ENCODE measurements at regions of chr17 and their contacts with region 1.

Region 1: GRCh38 chr17:27236717-27237315 is 57.1 kb upstream of the WSB1 start:
- DNase-seq: no peak
- H3K4me3 ChIP-seq: no peak overlapping the region
- H3K27me3 ChIP-seq: no peaks in the 10 kb centered on the region
- CTCF ChIP-seq: peak; percentile 84

Region 2: GRCh38 chr17:27106347-27106981 is 130.4 kb before region 1 on chr17:
- CTCF ChIA-PET with region 1: no interaction called
- POLR2A ChIA-PET with region 1: no interaction called
- DNase-seq: no peak
- H3K4me3 ChIP-seq: no peak overlapping the region
- H3K27me3 ChIP-seq: no peaks in the 10 kb centered on the region
- CTCF ChIP-seq: no peak

Region 3: DNA sequence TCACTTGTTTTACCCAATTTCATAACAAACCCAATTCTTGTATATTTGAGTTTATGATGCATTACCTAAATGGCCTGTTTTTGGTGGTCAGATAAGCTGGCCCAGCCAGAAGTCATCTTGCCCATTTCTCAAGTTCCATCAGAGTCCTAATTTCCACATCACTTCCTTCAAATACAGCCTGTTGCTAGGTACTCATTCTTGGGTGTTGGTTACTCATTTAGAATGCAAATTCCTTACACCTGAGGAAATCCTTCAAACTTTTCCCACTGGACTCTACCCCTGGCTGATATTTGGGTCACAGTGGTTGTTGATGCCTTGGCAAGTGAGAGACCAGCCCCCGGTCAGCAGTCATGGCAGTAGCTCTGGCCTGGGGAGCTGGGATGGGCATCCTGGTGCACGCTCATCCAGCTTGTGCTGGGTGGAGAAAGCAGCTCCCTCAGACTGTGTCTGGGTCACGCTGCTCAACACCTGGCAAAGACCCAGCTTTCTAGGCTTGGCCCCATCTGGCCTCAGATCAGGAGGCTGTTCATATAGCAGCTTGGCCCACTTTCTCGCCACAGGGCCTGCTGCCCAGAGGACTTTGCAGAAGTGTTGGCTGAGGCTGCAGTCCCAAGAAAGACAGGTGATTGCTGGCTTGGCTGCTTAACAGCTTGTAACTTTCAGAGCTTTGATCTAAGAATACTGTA is 82.9 kb after region 1 on chr17:
- CTCF ChIA-PET with region 1: interaction called, 29 read pairs
- POLR2A ChIA-PET with region 1: no interaction called
- DNase-seq: no peak
- H3K4me3 ChIP-seq: no peak overlapping the region
- H3K27me3 ChIP-seq: no peaks in the 10 kb centered on the region
- CTCF ChIP-seq: no peak

Region 4: GRCh38 chr17:27332485-27333409 is 95.9 kb after region 1 on chr17:
- CTCF ChIA-PET with region 1: interaction called, 162 read pairs
- POLR2A ChIA-PET with region 1: interaction called, 4 read pairs
- DNase-seq: peak; percentile 86
- H3K4me3 ChIP-seq: peak overlapping the region; percentile 47
- H3K27me3 ChIP-seq: no peaks in the 10 kb centered on the region
- CTCF ChIP-seq: peak; percentile 88

Region 5: DNA sequence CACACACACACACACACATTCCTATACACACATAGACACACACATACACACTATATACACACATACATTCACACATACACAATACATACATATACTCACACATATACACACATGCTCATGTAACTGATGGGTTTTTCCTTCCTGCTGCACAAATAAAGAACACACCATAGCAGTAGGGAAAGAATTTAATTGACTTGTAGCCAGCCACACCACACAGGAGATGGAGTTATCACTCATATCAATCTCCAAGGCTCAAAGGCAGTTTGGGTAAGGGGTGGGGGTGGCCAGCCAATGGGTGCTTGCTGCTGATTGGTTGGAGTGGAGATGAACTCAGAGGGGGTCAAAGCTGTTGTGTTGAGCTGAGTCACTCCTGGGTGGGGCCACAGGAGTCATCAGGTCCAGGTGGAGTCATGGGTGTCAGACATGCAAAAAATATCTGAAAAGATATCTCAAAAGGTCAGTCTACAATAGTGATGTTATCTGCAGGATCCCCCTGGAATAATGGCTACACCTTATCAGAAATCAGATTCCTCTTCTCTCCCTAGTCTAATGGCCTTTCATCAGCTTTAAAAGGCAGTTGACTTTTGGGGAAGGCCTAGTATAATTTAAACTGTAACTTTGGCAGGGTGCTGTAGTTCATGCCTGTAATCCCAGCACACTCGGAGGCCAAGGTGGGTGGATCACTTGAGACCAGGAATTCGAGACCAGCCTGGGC is 103.2 kb after region 1 on chr17:
- CTCF ChIA-PET with region 1: interaction called, 162 read pairs
- POLR2A ChIA-PET with region 1: no interaction called
- DNase-seq: no peak
- H3K4me3 ChIP-seq: no peak overlapping the region
- H3K27me3 ChIP-seq: no peaks in the 10 kb centered on the region
- CTCF ChIP-seq: no peak

Region 6: GRCh38 chr17:27345141-27345904 is 108.5 kb after region 1 on chr17:
- CTCF ChIA-PET with region 1: interaction called, 34 read pairs
- POLR2A ChIA-PET with region 1: no interaction called
- DNase-seq: no peak
- H3K4me3 ChIP-seq: no peak overlapping the region
- H3K27me3 ChIP-seq: no peaks in the 10 kb centered on the region
- CTCF ChIP-seq: no peak

Region 7: GRCh38 chr17:27353461-27354050 is 116.7 kb after region 1 on chr17:
- CTCF ChIA-PET with region 1: interaction called, 34 read pairs
- POLR2A ChIA-PET with region 1: no interaction called
- DNase-seq: peak; percentile 46
- H3K4me3 ChIP-seq: peak overlapping the region; percentile 77
- H3K27me3 ChIP-seq: no peaks in the 10 kb centered on the region
- CTCF ChIP-seq: peak; percentile 18; the same call in 1 of the 2 replicates

Region 8: DNA sequence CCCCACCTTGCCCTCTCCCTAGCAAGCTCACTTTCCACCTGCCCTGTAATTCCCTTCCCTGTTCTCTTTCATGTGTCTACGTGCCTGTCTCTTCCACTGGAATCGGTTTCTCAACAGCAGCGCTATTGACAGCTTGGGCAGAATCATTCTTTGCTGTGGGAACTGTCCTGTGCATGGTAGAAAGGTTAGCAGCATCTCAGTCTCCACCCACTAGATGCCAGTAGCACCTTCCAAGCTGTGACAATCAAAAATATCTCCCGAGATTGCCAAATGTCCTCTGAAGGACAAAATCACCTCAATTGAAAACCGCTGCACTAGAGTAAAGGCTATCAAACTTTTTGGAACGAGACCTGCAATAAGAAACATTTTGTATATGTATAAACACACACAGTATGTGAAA is 177.9 kb after region 1 on chr17:
- CTCF ChIA-PET with region 1: no interaction called
- POLR2A ChIA-PET with region 1: no interaction called
- DNase-seq: no peak
- H3K4me3 ChIP-seq: no peak overlapping the region
- H3K27me3 ChIP-seq: no peaks in the 10 kb centered on the region
- CTCF ChIP-seq: no peak

Region 9: GRCh38 chr17:27654654-27655524 is 418.1 kb after region 1 on chr17:
- CTCF ChIA-PET with region 1: interaction called, 34 read pairs
- POLR2A ChIA-PET with region 1: no interaction called
- DNase-seq: no peak
- H3K4me3 ChIP-seq: no peak overlapping the region
- H3K27me3 ChIP-seq: no peaks in the 10 kb centered on the region
- CTCF ChIP-seq: peak; percentile 82